Activated naive CD4-positive, alpha-beta T cell treated with anti-CD3 and anti-CD28 coated beads for 36 hours (primary cell): ENCODE measurements at regions of chr22 and their contacts with region 1.

Region 1: DNA sequence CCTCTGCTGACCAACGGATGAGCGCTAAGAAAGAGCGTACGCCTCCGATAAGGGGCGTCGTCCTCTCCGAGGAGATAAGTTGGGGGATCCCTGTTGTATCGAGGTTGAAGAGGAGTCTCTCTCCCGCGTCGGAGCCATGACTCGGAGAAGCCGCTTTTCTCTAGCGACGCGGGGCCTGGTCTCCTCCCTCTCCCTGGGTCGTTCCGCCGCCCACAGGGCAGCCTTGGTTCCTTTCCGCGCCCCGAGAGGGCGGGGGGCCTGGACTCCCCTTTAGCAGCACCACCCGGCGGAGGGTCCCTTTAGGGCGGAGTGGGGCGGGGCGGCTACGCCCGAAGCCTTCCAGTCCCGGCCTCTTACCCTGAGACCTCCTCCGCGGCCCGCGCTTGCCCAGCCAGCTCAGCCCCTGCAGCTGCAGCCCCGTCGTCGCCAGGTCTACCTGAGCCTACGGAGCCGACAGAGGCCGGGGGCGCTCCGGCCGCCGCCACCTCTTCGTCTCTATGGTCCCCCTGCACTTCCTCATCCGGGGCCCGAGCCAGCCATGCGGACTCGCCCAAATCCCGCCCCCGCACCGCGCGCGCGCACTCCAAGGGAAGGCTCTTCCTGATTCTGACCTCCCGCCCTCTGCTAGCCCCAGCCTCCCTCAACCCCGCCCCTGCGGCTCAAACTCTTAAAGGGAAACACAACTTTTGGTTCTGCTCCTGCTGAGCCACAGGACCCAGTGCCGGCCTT is at the start of gene PRR14L:
- DNase-seq: peak; percentile 99
- H3K4me3 Mint-ChIP-seq: peak within 1 kb of the TSS; percentile 87
- H3K27ac Mint-ChIP-seq: peak within 1 kb of the TSS; percentile 93
- H3K4me1 Mint-ChIP-seq: peaks cover 55% of the 10 kb centered on the region
- H3K27me3 Mint-ChIP-seq: no peaks in the 10 kb centered on the region
- total RNA-seq, gene PRR14L: 28.7 to 31.8 TPM

Region 2: GRCh38 chr22:31345331-31346254 is 404.2 kb before region 1 on chr22:
- CTCF ChIA-PET with region 1: interaction called, 3 read pairs
- intact Hi-C with region 1: loop called (anchors 5 kb)
- DNase-seq: peak; percentile 86
- H3K4me3 Mint-ChIP-seq: peak overlapping the region; percentile 90
- H3K27ac Mint-ChIP-seq: peak overlapping the region; percentile 94
- H3K4me1 Mint-ChIP-seq: peaks cover 42% of the 10 kb centered on the region
- H3K27me3 Mint-ChIP-seq: no peaks in the 10 kb centered on the region

Region 3: DNA sequence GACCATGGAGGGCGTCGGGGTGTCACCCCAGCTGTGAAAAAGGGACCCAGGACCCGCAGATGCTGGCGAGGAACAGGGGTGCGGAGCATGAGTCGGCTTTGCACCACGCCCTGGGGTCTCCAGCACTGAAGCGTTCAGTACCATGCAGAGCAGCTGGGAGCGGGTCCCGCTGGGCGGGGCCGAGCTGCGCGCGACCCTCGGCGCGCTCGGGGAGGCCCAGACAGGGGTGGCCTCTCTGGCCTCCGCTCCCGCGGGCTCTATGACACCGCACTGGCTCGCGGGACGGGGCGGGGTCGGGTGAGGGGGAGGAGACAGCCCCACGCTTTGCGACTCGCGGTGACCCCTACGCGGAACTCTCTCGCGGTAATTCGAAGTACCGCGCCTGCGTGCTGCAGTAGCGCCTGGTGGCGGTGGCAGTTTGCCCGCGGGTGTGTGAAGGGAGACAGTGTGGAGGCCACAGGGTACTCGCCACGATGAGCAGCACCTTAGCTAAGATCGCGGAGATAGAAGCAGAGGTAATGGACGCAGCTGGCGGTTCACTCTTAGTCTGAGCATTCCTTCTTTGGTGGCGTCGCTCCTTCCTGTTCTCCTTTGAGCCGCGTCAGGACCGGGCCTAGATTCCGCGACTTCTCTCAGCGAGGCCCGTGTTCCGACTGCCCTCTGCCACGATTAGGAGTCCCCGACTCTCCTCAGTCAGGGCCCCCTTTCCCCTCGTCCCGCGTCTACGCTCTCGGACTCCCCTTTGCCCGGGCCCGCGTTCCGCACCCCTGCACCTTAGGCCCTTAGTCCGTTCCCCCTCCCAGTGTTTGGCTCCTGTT is 350.4 kb before region 1 on chr22 and contains the start of gene DRG1:
- CTCF ChIA-PET with region 1: no interaction called
- intact Hi-C with region 1: loop called (anchors 5 kb)
- DNase-seq: peak; percentile 98
- H3K4me3 Mint-ChIP-seq: peak within 1 kb of the TSS; percentile 92
- H3K27ac Mint-ChIP-seq: peak within 1 kb of the TSS; percentile 82
- H3K4me1 Mint-ChIP-seq: peaks cover 21% of the 10 kb centered on the region
- H3K27me3 Mint-ChIP-seq: no peaks in the 10 kb centered on the region
- total RNA-seq, gene DRG1: 77.1 to 78.7 TPM

Region 4: DNA sequence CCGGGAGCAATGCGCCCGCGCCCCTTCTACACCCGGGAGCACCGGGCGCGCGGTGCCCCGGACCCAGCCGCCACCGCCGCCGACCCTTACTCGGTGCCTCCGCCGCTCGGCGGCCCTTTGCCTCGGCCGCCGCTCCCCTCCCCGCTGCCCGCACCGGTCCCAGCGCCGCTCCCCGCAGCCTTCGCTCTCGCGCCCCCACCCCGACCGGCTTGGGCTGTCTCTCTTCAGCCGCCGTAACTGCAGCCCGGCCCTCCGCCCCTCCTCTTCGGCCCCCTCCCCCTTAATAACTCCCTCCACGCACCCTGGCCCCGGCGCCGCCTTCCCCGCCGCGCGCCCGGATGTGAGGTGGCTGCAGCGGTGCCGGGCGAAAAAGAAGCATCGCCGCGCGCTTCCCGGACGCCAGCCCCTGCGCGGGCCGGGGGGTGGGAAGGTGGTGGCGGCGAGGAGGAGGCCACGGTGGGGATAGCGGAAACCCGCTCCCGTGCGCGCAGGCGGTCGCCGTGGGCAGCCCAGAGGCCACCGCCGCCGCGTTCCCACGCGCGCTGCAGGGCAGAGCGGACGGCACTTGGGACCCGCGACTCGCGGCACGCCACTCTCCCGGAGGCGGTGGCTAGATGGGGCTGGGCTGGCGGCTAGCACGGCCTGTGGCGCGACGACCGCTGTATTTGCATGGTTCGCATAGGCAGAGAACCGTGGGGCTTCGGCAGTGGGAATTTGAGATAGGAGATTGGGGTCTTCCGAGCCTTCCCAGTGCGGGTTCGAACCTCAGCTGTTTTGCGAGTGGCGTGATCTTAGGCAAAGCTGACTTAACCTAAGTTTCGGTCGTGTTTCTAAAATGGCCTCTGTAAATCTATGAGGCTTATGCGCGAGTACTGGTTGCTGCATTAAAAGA is 259.9 kb before region 1 on chr22 and contains the start of gene EIF4ENIF1:
- CTCF ChIA-PET with region 1: no interaction called
- intact Hi-C with region 1: loop called (anchors 1 kb)
- DNase-seq: peak; percentile 88
- H3K4me3 Mint-ChIP-seq: peak within 1 kb of the TSS; percentile 83
- H3K27ac Mint-ChIP-seq: peak within 1 kb of the TSS; percentile 97
- H3K4me1 Mint-ChIP-seq: peaks cover 50% of the 10 kb centered on the region
- H3K27me3 Mint-ChIP-seq: no peaks in the 10 kb centered on the region
- total RNA-seq, gene EIF4ENIF1: 28.1 to 29.0 TPM

Region 5: DNA sequence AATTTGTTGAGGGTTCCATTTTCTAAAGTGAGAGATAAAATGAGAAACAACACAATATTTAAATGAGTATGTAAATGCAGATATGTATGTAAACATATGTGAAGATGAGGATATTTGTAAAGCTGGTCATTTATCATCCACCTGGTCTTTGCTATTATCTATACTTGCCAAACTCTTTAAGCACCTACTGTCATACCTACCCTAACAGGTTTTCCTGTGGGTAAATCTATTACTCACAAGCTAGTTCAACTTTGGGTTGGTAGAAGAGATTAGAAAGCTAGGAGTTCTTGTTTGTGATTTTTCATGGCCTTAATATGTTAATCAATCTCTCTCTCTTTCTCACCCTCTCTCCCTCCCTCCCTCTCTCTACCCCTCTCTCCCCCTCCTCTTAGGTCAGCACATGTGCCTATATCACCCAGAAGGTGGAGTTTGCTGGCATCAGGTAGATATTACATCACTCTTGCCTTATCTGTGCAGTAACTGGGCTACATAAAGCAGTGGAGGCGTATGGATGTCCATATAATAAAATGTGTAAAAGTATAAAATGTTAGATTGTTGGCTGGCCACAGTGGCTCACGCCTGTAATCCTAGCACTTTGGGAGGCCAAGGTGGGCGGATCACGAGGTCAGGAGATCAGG is 18.7 kb after region 1 on chr22:
- CTCF ChIA-PET with region 1: no interaction called
- intact Hi-C with region 1: loop called (anchors 1 kb)
- DNase-seq: no peak
- H3K4me3 Mint-ChIP-seq: no peak overlapping the region
- H3K27ac Mint-ChIP-seq: peak overlapping the region; percentile 50
- H3K4me1 Mint-ChIP-seq: peaks cover 12% of the 10 kb centered on the region
- H3K27me3 Mint-ChIP-seq: no peaks in the 10 kb centered on the region

Region 6: GRCh38 chr22:31802575-31802974 is 52.8 kb after region 1 on chr22:
- CTCF ChIA-PET with region 1: no interaction called
- intact Hi-C with region 1: no loop called
- DNase-seq: no peak
- H3K4me3 Mint-ChIP-seq: no peak overlapping the region
- H3K27ac Mint-ChIP-seq: no peak overlapping the region
- H3K4me1 Mint-ChIP-seq: no peaks in the 10 kb centered on the region
- H3K27me3 Mint-ChIP-seq: no peaks in the 10 kb centered on the region